Mammary epithelial cell (primary cell): ENCODE measurements at regions of chr12 and their contacts with region 1.

Region 1: GRCh38 chr12:86104087-86104486 is 152.1 kb downstream of the MGAT4C start:
- DNase-seq: peak; percentile 27
- H3K4me3 ChIP-seq: no peak overlapping the region
- H3K27ac ChIP-seq: no peak overlapping the region
- H3K4me1 ChIP-seq: no peaks in the 10 kb centered on the region
- H3K27me3 ChIP-seq: no peaks in the 10 kb centered on the region
- CTCF ChIP-seq: no peak

Region 2: GRCh38 chr12:85923767-85924331 is 180.2 kb before region 1 on chr12:
- CTCF ChIA-PET with region 1: no interaction called
- dilution Hi-C with region 1: no loop called
- in situ Hi-C with region 1: no loop called
- intact Hi-C with region 1: no loop called
- DNase-seq: peak; percentile 3
- H3K4me3 ChIP-seq: no peak overlapping the region
- H3K27ac ChIP-seq: no peak overlapping the region
- H3K4me1 ChIP-seq: no peaks in the 10 kb centered on the region
- H3K27me3 ChIP-seq: no peaks in the 10 kb centered on the region
- CTCF ChIP-seq: peak; percentile 65 to 70

Region 3: GRCh38 chr12:86091681-86092080 is 12.4 kb before region 1 on chr12:
- CTCF ChIA-PET with region 1: interaction called, 11 read pairs
- dilution Hi-C with region 1: no loop called
- in situ Hi-C with region 1: no loop called
- intact Hi-C with region 1: no loop called
- DNase-seq: no peak
- H3K4me3 ChIP-seq: no peak overlapping the region
- H3K27ac ChIP-seq: no peak overlapping the region
- H3K4me1 ChIP-seq: no peaks in the 10 kb centered on the region
- H3K27me3 ChIP-seq: no peaks in the 10 kb centered on the region
- CTCF ChIP-seq: no peak